Activated CD4-positive, alpha-beta memory T cell treated with anti-CD3 and anti-CD28 coated beads for 36 hours (primary cell): ENCODE measurements at regions of chr17 and their contacts with region 1.

Region 1: GRCh38 chr17:76278952-76279741 is 14.0 kb downstream of the UBALD2 start:
- DNase-seq: peak; percentile 90
- H3K4me3 Mint-ChIP-seq: no peak overlapping the region
- H3K27ac Mint-ChIP-seq: no peak overlapping the region
- H3K4me1 Mint-ChIP-seq: peaks cover 14% of the 10 kb centered on the region
- H3K27me3 Mint-ChIP-seq: no peaks in the 10 kb centered on the region

Region 2: DNA sequence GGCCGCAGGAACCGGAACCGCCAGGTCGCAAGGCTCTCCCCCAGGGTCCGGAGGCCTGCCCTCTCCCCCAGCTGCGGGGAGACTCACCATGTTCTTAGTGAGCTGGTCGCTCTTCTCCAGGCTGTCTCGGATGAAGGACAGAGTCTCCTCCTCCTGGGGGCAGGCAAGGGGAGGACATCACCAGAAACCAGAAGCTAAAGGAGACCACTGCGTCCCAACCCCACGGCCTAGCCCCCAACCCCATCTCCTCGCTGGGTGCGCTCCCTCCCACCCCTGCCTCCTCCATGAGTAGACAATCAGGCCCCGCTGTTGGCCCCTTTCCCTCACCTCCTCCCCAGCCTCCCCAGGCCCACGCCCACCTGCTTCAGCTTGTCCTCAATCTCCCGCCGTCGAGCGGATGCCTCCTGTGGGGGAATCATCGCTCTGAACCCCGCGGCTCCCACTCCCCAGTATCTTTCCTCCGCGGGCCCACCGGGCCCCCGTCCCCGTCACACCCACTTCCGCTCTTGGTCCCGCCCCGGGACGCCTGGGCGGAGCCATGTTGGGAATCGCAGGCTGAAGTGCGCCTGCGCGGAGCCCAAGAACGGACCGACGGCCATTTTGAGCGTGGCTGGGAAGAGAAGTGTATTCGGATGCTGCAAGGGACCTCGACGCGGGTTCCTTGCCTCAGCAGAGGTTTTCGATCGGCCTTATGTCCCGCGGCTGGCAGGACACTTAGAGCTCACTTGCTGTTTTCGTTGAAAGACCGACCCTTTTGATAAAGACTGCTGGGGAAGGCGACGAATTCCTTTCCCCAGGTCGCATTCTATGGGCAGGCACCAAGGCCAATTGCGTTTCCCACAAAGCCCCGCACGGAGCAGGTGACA is 175.6 kb before region 1 on chr17 and contains the start of gene EXOC7:
- CTCF ChIA-PET with region 1: interaction called, 21 read pairs
- POLR2A ChIA-PET with region 1: no interaction called
- intact Hi-C with region 1: no loop called
- DNase-seq: peak; percentile 95
- H3K4me3 Mint-ChIP-seq: peak within 1 kb of the TSS; percentile 98
- H3K27ac Mint-ChIP-seq: peak within 1 kb of the TSS; percentile 92
- H3K4me1 Mint-ChIP-seq: peaks cover 24% of the 10 kb centered on the region
- H3K27me3 Mint-ChIP-seq: no peaks in the 10 kb centered on the region
- total RNA-seq, gene EXOC7: 63.3 to 66.0 TPM

Region 3: GRCh38 chr17:76147211-76148014 is 131.7 kb before region 1 on chr17:
- CTCF ChIA-PET with region 1: interaction called, 14 read pairs
- POLR2A ChIA-PET with region 1: no interaction called
- intact Hi-C with region 1: no loop called
- DNase-seq: no peak
- H3K4me3 Mint-ChIP-seq: no peak overlapping the region
- H3K27ac Mint-ChIP-seq: peak overlapping the region; percentile 93
- H3K4me1 Mint-ChIP-seq: peaks cover 62% of the 10 kb centered on the region
- H3K27me3 Mint-ChIP-seq: no peaks in the 10 kb centered on the region

Region 4: DNA sequence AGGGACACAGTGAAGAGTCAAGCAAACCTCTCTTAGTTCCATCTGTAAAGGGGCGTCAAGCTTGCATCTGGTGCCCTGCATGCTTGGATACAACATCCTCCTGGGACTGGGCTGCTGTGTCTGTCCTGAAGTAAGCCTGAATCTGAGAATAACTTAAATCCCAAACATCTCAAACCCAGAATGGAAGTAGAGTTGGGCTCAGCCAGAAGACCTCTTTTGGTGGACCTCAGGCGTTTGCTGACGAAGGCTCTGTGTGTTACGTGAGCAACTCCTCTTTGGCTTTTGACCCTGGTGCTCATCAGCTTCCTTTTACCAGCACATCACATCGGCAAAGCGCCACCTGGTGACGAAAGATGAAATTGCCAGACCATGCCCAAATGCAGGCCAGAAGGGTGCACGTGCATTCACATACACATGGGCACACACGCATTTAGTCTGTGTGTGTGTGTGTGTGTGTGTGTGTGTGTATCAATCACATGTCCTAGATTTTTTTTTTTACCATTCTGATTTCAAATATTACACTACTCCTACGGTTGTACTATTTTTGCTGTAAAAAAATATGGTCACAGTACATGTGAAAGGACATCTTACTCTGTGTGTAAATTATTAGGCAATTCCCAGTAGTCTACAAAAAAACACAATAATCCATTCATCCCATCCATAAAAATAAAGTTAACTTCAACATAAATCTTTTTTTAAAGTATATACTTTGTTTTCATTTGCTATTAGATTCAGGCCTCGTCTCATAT is 97.0 kb before region 1 on chr17:
- CTCF ChIA-PET with region 1: interaction called, 114 read pairs
- POLR2A ChIA-PET with region 1: interaction called, 298 read pairs
- intact Hi-C with region 1: no loop called
- DNase-seq: peak; percentile 98
- H3K4me3 Mint-ChIP-seq: peak overlapping the region; percentile 62
- H3K27ac Mint-ChIP-seq: peak overlapping the region; percentile 87
- H3K4me1 Mint-ChIP-seq: peaks cover 56% of the 10 kb centered on the region
- H3K27me3 Mint-ChIP-seq: no peaks in the 10 kb centered on the region

Region 5: DNA sequence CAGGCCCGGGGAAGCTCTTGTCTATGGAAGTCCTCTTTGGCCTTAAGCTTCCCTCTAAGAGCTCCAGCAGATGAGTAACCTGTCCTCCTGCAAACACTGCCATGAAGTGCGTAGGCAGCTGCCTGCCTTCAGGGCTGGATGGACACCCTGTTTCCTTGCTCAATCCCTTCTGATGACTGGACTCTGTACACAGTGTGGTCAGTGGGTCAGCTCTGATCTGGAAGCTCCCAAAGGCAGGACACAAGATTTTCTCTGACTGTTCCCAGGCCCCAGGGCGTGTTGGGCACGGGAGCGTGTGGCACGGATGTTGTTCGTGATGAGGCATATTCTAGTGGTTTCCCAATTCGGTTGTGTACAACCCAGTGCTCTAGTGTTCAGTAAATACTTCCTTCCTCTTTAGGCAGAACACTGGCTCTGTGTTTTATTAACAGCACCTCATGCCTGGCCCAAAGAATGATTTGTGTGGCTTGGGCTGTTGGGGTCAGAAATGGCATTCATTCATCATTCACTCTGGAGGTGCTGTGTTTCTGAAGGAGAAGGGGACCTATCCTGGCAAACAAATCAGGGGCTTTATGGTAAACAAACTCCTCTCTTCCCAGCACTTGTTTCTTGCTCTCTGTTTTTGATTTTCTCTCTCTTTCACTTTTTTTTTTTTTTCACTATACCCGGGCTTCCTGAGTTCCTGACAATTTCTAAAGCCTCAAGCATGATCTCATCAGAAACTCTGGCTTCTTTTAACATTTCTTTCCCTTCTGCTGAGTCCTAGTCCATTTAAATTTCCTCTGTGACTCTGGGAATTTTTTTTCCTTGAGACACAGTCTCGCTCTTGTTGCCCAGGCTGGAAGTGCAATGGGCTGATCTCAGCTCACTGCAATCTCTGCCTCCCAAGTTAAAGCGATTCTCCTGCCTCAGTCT is 26.9 kb before region 1 on chr17:
- CTCF ChIA-PET with region 1: interaction called, 22 read pairs
- POLR2A ChIA-PET with region 1: interaction called, 6 read pairs
- intact Hi-C with region 1: no loop called
- DNase-seq: peak; percentile 61
- H3K4me3 Mint-ChIP-seq: peak overlapping the region; percentile 43
- H3K27ac Mint-ChIP-seq: peak overlapping the region; percentile 83
- H3K4me1 Mint-ChIP-seq: peaks cover 53% of the 10 kb centered on the region
- H3K27me3 Mint-ChIP-seq: no peaks in the 10 kb centered on the region

Region 6: GRCh38 chr17:76307299-76307965 is 28.3 kb after region 1 on chr17:
- CTCF ChIA-PET with region 1: interaction called, 10 read pairs
- POLR2A ChIA-PET with region 1: no interaction called
- intact Hi-C with region 1: no loop called
- DNase-seq: no peak
- H3K4me3 Mint-ChIP-seq: no peak overlapping the region
- H3K27ac Mint-ChIP-seq: no peak overlapping the region
- H3K4me1 Mint-ChIP-seq: no peaks in the 10 kb centered on the region
- H3K27me3 Mint-ChIP-seq: no peaks in the 10 kb centered on the region